ENCODE measurements at regions of chr6 and their contacts with region 1.

Region 1: GRCh38 chr6:149925974-149926777 is 3.3 kb upstream of the RAET1G start:
- DNase-seq: peak; percentile 67 to 96
- H3K4me3 ChIP-seq: peak overlapping the region; percentile 16
- H3K4me1 ChIP-seq: no peaks in the 10 kb centered on the region; the same call in 1 of the 2 replicates
- H3K27me3 ChIP-seq: peaks cover 4% of the 10 kb centered on the region

Region 2: GRCh38 chr6:149060300-149060997 is 865.7 kb before region 1 on chr6:
- in situ Hi-C with region 1: loop called (anchors 25 kb)
- DNase-seq: no peak
- H3K4me3 ChIP-seq: no peak overlapping the region
- H3K4me1 ChIP-seq: no peaks in the 10 kb centered on the region
- H3K27me3 ChIP-seq: no peaks in the 10 kb centered on the region

Region 3: GRCh38 chr6:149499066-149499465 is 427.1 kb before region 1 on chr6:
- in situ Hi-C with region 1: no loop called
- DNase-seq: no peak
- H3K4me3 ChIP-seq: no peak overlapping the region
- H3K4me1 ChIP-seq: no peaks in the 10 kb centered on the region
- H3K27me3 ChIP-seq: no peaks in the 10 kb centered on the region

Region 4: DNA sequence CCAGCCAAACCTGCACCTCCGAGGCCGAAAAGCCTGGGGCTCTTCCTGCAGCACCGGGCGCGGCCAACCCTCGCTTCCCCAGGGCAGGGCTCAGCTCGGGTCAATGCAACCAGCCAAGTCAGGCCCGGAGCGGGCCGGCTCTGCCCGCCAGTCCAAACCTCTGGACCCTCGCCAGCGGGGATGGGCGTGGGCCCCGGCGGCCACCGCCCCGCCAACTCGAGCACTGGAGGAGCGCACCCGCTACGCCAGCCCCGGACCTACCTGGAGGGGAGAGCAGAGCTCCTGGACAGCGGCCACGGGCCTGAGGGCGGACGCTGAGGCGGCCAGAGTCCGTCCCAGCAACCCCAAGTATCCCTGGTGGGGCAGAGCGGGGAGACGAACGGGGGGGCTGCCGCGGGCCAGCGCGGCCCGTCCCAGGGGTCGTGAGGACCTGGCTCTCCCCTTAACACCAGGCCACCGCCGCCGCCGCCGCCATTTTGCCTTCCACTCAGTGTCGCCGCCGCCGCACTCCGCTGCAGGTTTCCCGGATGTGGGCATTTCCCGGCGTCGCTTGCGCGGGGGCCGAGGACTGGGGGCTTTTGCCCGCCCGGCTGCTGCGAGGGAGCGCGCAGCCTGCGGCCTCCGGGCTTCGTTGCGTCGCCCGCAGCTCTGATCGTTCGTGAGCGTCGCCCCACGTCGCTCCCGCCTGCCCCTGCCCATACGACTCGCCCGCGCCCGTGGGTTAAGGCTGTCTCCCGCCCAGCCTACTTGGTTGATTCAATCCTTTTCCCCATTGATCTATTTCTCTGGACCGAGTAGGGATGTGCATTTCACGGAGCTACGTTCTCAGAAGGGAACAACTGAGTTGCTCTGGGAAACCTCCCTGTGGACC is 208.4 kb before region 1 on chr6 and contains the start of gene LATS1:
- in situ Hi-C with region 1: loop called (anchors 10 kb)
- DNase-seq: peak; percentile 88 to 94
- H3K4me3 ChIP-seq: peak within 1 kb of the TSS; percentile 99
- H3K4me1 ChIP-seq: peaks cover 11% of the 10 kb centered on the region
- H3K27me3 ChIP-seq: no peaks in the 10 kb centered on the region

Region 5: GRCh38 chr6:150334790-150335783 is 408.9 kb after region 1 on chr6:
- in situ Hi-C with region 1: loop called (anchors 25 kb)
- DNase-seq: peak; percentile 61 to 65
- H3K4me3 ChIP-seq: no peak overlapping the region
- H3K4me1 ChIP-seq: no peaks in the 10 kb centered on the region
- H3K27me3 ChIP-seq: no peaks in the 10 kb centered on the region

Region 6: DNA sequence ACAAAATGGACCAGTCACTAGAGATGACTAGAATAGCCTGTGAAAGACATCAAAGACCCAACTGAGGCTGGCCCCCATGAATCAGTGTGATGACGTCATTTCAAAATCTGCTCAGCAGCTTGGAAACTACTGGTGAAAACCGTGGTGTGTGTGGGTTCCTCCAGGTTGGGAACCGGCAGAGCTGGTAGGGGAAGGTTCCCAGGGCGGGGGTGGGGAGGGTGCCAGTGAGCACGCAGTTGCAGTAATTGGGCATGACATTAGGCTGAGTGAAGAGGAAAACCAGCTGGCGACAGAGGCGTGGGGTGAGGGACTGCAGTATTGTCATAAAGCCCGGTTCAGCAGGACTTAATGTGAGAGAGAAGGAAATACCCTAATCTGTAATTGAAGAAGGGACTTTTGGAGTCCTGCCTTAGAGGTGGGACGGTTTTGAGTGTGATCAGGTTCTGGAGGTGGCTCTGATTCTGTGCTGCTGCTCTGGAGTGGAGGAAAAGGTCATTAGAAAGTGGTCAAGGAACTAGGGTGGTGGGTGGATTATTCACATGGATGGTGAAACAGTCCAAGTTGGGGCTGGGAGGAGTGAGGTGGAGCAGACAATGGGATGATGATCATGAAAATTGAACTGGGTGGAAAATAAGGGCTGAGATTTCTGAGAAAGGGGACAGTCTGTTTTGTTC is 887.3 kb after region 1 on chr6:
- in situ Hi-C with region 1: loop called (anchors 25 kb)
- DNase-seq: no peak
- H3K4me3 ChIP-seq: no peak overlapping the region
- H3K4me1 ChIP-seq: no peaks in the 10 kb centered on the region; the same call in 1 of the 2 replicates
- H3K27me3 ChIP-seq: no peaks in the 10 kb centered on the region

Measured in HAP-1 (cell line).